CD14-positive monocyte (primary cell): ENCODE measurements at regions of chr13 and their contacts with region 1.

Region 1: DNA sequence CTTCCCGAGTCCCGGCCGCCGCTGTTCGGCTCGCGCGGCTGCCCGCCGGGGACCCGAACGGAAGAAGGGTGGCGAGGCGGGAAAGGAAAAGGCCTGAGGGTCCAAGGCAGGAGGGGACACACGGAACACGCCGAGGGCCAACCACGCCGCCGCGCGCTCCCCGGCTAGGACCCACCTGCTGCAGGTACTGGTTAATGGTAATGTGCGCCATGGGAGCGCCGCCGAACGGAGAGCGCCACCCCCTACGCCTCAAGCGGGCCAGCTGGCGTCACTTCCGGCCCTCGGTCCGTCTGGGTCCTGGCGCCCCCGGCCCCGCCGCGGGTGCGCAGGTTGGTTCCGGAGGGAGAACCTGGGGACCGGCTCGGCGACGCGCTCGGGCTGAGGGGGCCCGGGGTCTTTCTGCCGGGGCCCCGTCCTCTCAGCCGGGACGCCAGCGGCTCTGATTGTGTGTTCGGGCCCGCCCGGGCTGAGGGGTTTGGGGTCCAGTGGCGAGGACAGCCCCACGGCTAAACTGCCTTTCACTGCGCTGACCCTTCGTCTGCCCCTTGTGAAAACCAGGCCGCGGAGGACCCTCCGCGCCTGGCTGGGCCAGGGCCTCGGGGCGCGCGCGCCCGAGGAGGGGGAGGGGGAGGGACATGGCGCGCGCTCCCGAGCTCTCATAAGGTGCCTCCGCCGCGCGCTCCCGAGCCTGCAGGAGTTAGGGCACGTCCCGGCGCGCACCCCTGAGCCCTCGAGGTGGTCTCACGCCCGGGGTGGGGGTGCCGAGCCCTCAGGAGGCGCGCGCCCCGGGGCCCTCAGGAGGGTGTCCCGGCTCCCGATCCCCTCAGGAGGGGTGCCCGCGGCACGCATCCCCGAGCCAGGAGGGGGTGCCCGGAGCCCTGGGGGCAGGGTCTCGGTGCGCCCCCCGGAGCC is at the start of gene PCID2:
- DNase-seq: peak; percentile 82 to 89 (median 85)
- H3K4me3 ChIP-seq: peak within 1 kb of the TSS; percentile 76 to 92 (median 90)
- H3K4me3 Mint-ChIP-seq: peak within 1 kb of the TSS; percentile 86 to 89
- H3K27ac ChIP-seq: peak within 1 kb of the TSS; percentile 89 to 98
- H3K27ac Mint-ChIP-seq: peak within 1 kb of the TSS; percentile 76 to 93 (median 88)
- H3K4me1 ChIP-seq: peaks cover 14 to 30% of the 10 kb centered on the region in 2 donors
- H3K4me1 Mint-ChIP-seq: peaks cover 39% of the 10 kb centered on the region
- H3K27me3 ChIP-seq: no peaks in the 10 kb centered on the region
- H3K27me3 Mint-ChIP-seq: no peaks in the 10 kb centered on the region
- CTCF ChIP-seq: no peak
- polyA plus RNA-seq, gene PCID2: 31.5 to 39.8 (median 34.2) TPM

Region 2: GRCh38 chr13:112587212-112587763 is 621.4 kb before region 1 on chr13:
- intact Hi-C with region 1: loop called (anchors 5 to 10 kb)
- DNase-seq: peak; percentile 78 to 82 (median 81)
- H3K4me3 ChIP-seq: peak overlapping the region; percentile 83 to 96 (median 88)
- H3K4me3 Mint-ChIP-seq: peak overlapping the region; percentile 95 to 99
- H3K27ac ChIP-seq: peak overlapping the region; percentile 87 to 91
- H3K27ac Mint-ChIP-seq: peak overlapping the region; percentile 91 to 99 (median 97)
- H3K4me1 ChIP-seq: peaks cover 48 to 60% of the 10 kb centered on the region in 2 donors
- H3K4me1 Mint-ChIP-seq: peaks cover 58% of the 10 kb centered on the region
- H3K27me3 ChIP-seq: no peaks in the 10 kb centered on the region
- H3K27me3 Mint-ChIP-seq: peaks cover 0 to 2% (median 0%) of the 10 kb centered on the region in 3 donors
- CTCF ChIP-seq: no peak

Region 3: GRCh38 chr13:113153810-113154748 is 54.6 kb before region 1 on chr13:
- intact Hi-C with region 1: loop called (anchors 2 kb)
- DNase-seq: peak; percentile 61 to 81 (median 64)
- H3K4me3 ChIP-seq: peak overlapping the region; percentile 31 to 77 (median 46)
- H3K4me3 Mint-ChIP-seq: peak overlapping the region; percentile 83 to 91
- H3K27ac ChIP-seq: peak overlapping the region in 1 of 2 donors; percentile 45
- H3K27ac Mint-ChIP-seq: peak overlapping the region; percentile 45 to 91 (median 75)
- H3K4me1 ChIP-seq: peaks cover 24 to 28% of the 10 kb centered on the region in 2 donors
- H3K4me1 Mint-ChIP-seq: peaks cover 27% of the 10 kb centered on the region
- H3K27me3 ChIP-seq: peaks cover 13 to 27% of the 10 kb centered on the region in 2 donors
- H3K27me3 Mint-ChIP-seq: peaks cover 27 to 38% (median 32%) of the 10 kb centered on the region in 3 donors
- CTCF ChIP-seq: no peak

Region 4: GRCh38 chr13:113296842-113297369 is 88.2 kb after region 1 on chr13 and contains the start of gene LAMP1:
- intact Hi-C with region 1: loop called (anchors 2 to 10 kb)
- DNase-seq: peak; percentile 92 to 98 (median 98)
- H3K4me3 ChIP-seq: peak within 1 kb of the TSS; percentile 45 to 76 (median 65)
- H3K4me3 Mint-ChIP-seq: peak within 1 kb of the TSS; percentile 91 to 96
- H3K27ac ChIP-seq: peak within 1 kb of the TSS; percentile 70 to 87
- H3K27ac Mint-ChIP-seq: peak within 1 kb of the TSS; percentile 86 to 96 (median 94)
- H3K4me1 ChIP-seq: peaks cover 40 to 58% of the 10 kb centered on the region in 2 donors
- H3K4me1 Mint-ChIP-seq: peaks cover 40% of the 10 kb centered on the region
- H3K27me3 ChIP-seq: peaks cover 0 to 6% of the 10 kb centered on the region in 2 donors
- H3K27me3 Mint-ChIP-seq: peaks cover 6 to 20% (median 16%) of the 10 kb centered on the region in 3 donors
- CTCF ChIP-seq: no peak
- polyA plus RNA-seq, gene LAMP1: 22.0 to 122 (median 24.5) TPM